ENCODE measurements at regions of chr1 and their contacts with region 1.

Region 1: GRCh38 chr1:178282949-178283367 is 189.1 kb downstream of the RASAL2 start:
- DNase-seq: no peak
- H3K4me3 ChIP-seq: no peak overlapping the region
- H3K27ac ChIP-seq: no peak overlapping the region
- H3K4me1 ChIP-seq: no peaks in the 10 kb centered on the region
- H3K27me3 ChIP-seq: no peaks in the 10 kb centered on the region
- CTCF ChIP-seq: peak in 1 of 3 donors; percentile 13
- EP300 ChIP-seq: no peak
- POLR2A ChIP-seq: no peak

Region 2: GRCh38 chr1:177959811-177960515 is 323.0 kb before region 1 on chr1:
- intact Hi-C with region 1: loop called in 1 of 4 experiments (anchors 10 kb)
- DNase-seq: no peak
- H3K4me3 ChIP-seq: no peak overlapping the region
- H3K27ac ChIP-seq: no peak overlapping the region
- H3K4me1 ChIP-seq: no peaks in the 10 kb centered on the region
- H3K27me3 ChIP-seq: no peaks in the 10 kb centered on the region
- CTCF ChIP-seq: no peak
- EP300 ChIP-seq: no peak
- POLR2A ChIP-seq: no peak

Region 3: GRCh38 chr1:177984136-177984525 is 298.8 kb before region 1 on chr1:
- intact Hi-C with region 1: no loop called
- DNase-seq: peak; percentile 57 to 74 (median 64)
- H3K4me3 ChIP-seq: no peak overlapping the region
- H3K27ac ChIP-seq: peak overlapping the region in 1 of 2 donors; percentile 15
- H3K4me1 ChIP-seq: peaks cover 2% of the 10 kb centered on the region
- H3K27me3 ChIP-seq: no peaks in the 10 kb centered on the region
- CTCF ChIP-seq: no peak
- EP300 ChIP-seq: no peak
- POLR2A ChIP-seq: no peak

Region 4: DNA sequence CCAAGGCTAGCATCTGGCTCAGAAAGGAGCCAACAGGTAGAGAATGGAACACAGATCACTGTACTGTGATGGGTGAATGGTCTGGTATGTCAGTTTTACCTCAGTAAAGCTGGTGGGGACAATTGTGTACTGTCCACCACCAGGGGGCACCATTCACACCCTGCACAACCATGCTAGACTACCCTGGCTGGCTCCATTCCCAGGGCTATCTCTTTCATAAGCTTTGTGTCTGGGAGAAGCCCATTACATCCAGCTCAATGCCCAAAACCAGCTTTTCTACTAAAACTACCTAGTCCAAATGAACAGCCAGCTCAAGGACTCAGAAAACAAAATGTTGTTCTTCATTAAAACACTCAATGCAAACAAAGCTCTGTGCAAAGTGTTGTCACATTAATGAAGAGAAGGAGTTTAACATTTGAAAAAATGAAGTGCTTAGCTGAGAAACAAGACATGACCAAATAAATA is 251.1 kb before region 1 on chr1:
- intact Hi-C with region 1: loop called in 2 of 4 experiments (anchors 5 to 10 kb)
- DNase-seq: peak; percentile 81 to 91 (median 87)
- H3K4me3 ChIP-seq: no peak overlapping the region
- H3K27ac ChIP-seq: no peak overlapping the region
- H3K4me1 ChIP-seq: no peaks in the 10 kb centered on the region
- H3K27me3 ChIP-seq: no peaks in the 10 kb centered on the region
- CTCF ChIP-seq: peak; percentile 62 to 71 (median 66)
- EP300 ChIP-seq: no peak
- POLR2A ChIP-seq: no peak

Region 5: DNA sequence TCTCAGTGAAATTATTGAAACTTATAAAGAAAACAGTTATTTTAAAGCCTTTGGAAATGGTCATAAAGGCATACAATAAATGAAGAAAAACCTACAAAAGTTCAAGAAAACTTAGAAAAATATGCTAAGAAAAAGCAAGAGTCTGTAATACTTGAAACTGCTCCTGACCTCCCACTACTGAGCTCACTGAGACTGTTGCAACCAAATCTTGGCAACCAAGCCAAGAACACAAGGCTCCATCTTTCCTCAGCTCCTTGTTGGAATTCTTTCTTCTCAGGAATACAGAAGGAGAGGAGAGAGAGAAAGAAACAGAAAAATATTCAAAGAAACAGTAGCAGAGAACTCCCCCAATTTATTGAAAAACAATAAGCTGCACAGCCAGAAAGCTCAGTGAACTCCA is 28.5 kb before region 1 on chr1:
- intact Hi-C with region 1: no loop called
- DNase-seq: no peak
- H3K4me3 ChIP-seq: no peak overlapping the region
- H3K27ac ChIP-seq: no peak overlapping the region
- H3K4me1 ChIP-seq: no peaks in the 10 kb centered on the region
- H3K27me3 ChIP-seq: no peaks in the 10 kb centered on the region
- CTCF ChIP-seq: no peak
- EP300 ChIP-seq: no peak
- POLR2A ChIP-seq: no peak